ENCODE measurements at regions of chr2 and their contacts with region 1.

Region 1: GRCh38 chr2:224585205-224586088 is at the start of gene CUL3:
- DNase-seq: peak; percentile 99 to 100
- ATAC-seq: peak; percentile 97 to 100 (median 99)
- H3K4me3 ChIP-seq: peak within 1 kb of the TSS; percentile 72 to 85 (median 78)
- H3K27ac ChIP-seq: peak within 1 kb of the TSS; percentile 85 to 96 (median 90)
- H3K4me1 ChIP-seq: peaks cover 0 to 52% (median 32%) of the 10 kb centered on the region in 9 donors
- H3K27me3 ChIP-seq: no peaks in the 10 kb centered on the region
- CTCF ChIP-seq: no peak
- total RNA-seq, gene CUL3: 60.2 to 87.9 (median 69.8) TPM

Region 2: DNA sequence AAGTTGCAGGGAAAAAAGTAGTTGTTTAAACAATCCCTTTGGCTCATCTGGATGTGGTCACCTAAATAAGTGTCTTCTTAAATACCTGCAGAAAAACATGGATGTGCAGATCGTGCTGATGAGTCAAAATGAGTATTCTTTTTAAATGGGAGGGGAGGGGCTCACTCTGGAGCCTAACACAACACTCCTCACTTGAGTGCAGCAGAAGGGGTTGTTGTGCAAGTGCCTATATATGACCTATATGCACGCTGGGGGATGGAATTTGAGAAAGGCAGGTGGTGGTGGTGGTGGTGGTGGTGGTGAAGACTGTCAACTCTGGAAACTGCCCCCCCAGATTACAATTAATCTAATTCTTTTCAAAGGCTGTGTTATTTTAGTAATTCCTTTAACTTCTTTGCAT is 105.6 kb before region 1 on chr2:
- intact Hi-C with region 1: loop called in 3 of 10 experiments (anchors 10 kb)
- DNase-seq: no peak
- ATAC-seq: no peak
- H3K4me3 ChIP-seq: no peak overlapping the region
- H3K27ac ChIP-seq: no peak overlapping the region
- H3K4me1 ChIP-seq: no peaks in the 10 kb centered on the region
- H3K27me3 ChIP-seq: no peaks in the 10 kb centered on the region
- CTCF ChIP-seq: no peak